ENCODE measurements at regions of chr3 and their contacts with region 1.

Region 1: DNA sequence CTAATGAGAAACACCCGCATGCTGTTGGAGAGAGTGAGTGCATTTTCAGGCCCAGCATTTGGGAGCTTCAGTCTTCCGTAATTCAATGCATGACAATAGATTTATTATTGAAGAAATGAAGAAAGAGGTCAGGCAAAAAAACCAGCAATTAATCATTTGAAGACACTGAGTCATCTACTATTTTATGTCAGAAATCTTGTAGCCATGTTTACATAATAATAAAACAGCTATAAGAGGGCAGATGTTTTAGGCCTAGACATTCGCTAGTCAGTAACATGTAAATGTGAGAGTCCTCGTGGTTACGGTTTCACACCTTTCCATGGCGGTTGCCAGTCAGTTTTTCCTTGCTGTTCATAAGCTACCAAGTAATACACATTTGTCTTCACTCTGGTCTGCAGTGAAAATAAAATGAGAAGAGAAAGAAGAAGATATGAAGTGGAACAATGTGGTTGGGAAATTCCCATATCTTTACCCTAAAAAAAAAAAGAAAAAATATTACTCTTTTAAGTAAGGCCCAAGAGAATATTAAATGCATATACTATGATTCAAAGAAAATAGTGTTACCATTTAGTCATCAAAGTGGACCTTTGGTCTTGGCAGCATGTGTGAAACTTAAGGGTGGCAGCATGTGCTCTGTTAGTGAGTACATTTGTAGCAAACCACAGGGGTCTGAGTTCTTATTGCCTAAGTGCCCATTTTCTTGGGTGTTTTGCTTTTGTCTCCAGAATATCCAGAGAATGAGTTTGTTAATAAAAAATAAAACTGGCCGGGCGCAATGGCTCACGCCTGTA is 140.5 kb upstream of the TBL1XR1 start:
- DNase-seq: peak in 7 of 9 experiments; percentile 19 to 87 (median 57)
- ATAC-seq: peak; percentile 68
- H3K4me3 ChIP-seq: no peak overlapping the region
- H3K4me3 Mint-ChIP-seq: no peak overlapping the region
- H3K27ac ChIP-seq: no peak overlapping the region
- H3K27ac Mint-ChIP-seq: peak overlapping the region; percentile 60
- H3K4me1 ChIP-seq: peaks cover 4% of the 10 kb centered on the region
- H3K4me1 Mint-ChIP-seq: peaks cover 25% of the 10 kb centered on the region
- H3K27me3 ChIP-seq: no peaks in the 10 kb centered on the region
- H3K27me3 Mint-ChIP-seq: no peaks in the 10 kb centered on the region
- CTCF ChIP-seq: no peak

Region 2: GRCh38 chr3:177263615-177264368 is 73.9 kb before region 1 on chr3:
- CTCF ChIA-PET with region 1: no interaction called
- POLR2A ChIA-PET with region 1: no interaction called
- intact Hi-C with region 1: loop called in 1 of 2 experiments (anchors 5 kb)
- DNase-seq: peak in 1 of 9 experiments; percentile 21
- ATAC-seq: no peak
- H3K4me3 ChIP-seq: no peak overlapping the region
- H3K4me3 Mint-ChIP-seq: no peak overlapping the region
- H3K27ac ChIP-seq: no peak overlapping the region
- H3K27ac Mint-ChIP-seq: no peak overlapping the region
- H3K4me1 ChIP-seq: no peaks in the 10 kb centered on the region
- H3K4me1 Mint-ChIP-seq: no peaks in the 10 kb centered on the region
- H3K27me3 ChIP-seq: no peaks in the 10 kb centered on the region
- H3K27me3 Mint-ChIP-seq: no peaks in the 10 kb centered on the region
- CTCF ChIP-seq: no peak

Region 3: GRCh38 chr3:177354466-177354865 is 16.7 kb after region 1 on chr3:
- CTCF ChIA-PET with region 1: interaction called, 3 read pairs
- POLR2A ChIA-PET with region 1: no interaction called
- intact Hi-C with region 1: loop called in 1 of 2 experiments (anchors 2 kb)
- DNase-seq: no peak
- ATAC-seq: no peak
- H3K4me3 ChIP-seq: no peak overlapping the region
- H3K4me3 Mint-ChIP-seq: no peak overlapping the region
- H3K27ac ChIP-seq: no peak overlapping the region
- H3K27ac Mint-ChIP-seq: no peak overlapping the region
- H3K4me1 ChIP-seq: peaks cover 17% of the 10 kb centered on the region
- H3K4me1 Mint-ChIP-seq: peaks cover 40% of the 10 kb centered on the region
- H3K27me3 ChIP-seq: no peaks in the 10 kb centered on the region
- H3K27me3 Mint-ChIP-seq: no peaks in the 10 kb centered on the region
- CTCF ChIP-seq: no peak

Region 4: GRCh38 chr3:177385831-177386301 is 48.1 kb after region 1 on chr3:
- CTCF ChIA-PET with region 1: no interaction called
- POLR2A ChIA-PET with region 1: no interaction called
- intact Hi-C with region 1: no loop called
- DNase-seq: no peak
- ATAC-seq: no peak
- H3K4me3 ChIP-seq: no peak overlapping the region
- H3K4me3 Mint-ChIP-seq: no peak overlapping the region
- H3K27ac ChIP-seq: no peak overlapping the region
- H3K27ac Mint-ChIP-seq: no peak overlapping the region
- H3K4me1 ChIP-seq: no peaks in the 10 kb centered on the region
- H3K4me1 Mint-ChIP-seq: no peaks in the 10 kb centered on the region
- H3K27me3 ChIP-seq: no peaks in the 10 kb centered on the region
- H3K27me3 Mint-ChIP-seq: no peaks in the 10 kb centered on the region
- CTCF ChIP-seq: no peak